Gastrocnemius medialis (tissue), 4 donors: ENCODE measurements at regions of chr17 and their contacts with region 1.

Region 1: DNA sequence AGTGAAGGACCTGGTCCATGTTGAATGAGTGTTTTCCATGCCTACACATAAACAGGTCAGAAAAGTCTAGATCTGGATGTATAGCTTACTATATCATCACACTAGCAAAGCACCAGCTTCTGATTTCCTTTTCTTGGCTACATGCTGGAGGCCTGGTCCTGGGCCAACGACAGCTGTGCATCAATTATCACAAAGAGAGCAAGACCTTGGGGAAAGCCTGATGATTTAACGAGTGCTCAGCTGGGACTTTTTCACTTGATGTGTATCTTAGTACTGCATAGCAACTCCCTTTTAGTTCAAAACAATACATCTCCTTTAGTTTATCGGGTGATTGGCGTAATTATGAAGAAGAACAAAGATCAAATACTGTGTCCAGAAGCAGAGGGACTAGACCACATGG is 358.2 kb downstream of the KIF2B start:
- DNase-seq: no peak
- ATAC-seq: no peak
- H3K4me3 ChIP-seq: no peak overlapping the region
- H3K27ac ChIP-seq: no peak overlapping the region
- H3K4me1 ChIP-seq: no peaks in the 10 kb centered on the region
- H3K27me3 ChIP-seq: no peaks in the 10 kb centered on the region
- CTCF ChIP-seq: no peak
- POLR2A ChIP-seq: no peak

Region 2: DNA sequence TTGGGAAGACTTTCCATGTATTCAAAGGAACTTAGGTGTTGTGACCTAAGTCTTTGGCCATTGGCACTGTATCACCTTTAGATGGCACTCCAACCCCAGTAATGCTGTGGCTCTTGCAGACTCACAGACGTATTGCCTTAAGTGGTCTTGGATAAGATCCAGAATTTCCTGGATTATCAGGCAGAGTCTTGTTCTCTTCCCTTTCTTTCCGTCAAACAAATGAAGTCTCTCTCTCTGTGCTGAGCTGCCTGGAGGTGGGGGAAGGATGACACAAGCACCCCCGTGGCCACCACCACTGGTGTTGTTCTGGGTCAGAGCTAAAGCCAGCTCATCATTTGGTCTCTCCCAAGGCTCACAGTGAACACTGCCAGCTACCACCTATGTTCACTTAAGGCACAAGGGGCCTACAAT is 1148.1 kb before region 1 on chr17:
- in situ Hi-C with region 1: loop called in 1 of 4 experiments (anchors 25 kb)
- intact Hi-C with region 1: loop called (anchors 10 kb)
- DNase-seq: peak in 1 of 2 donors; percentile 18
- ATAC-seq: no peak
- H3K4me3 ChIP-seq: no peak overlapping the region
- H3K27ac ChIP-seq: no peak overlapping the region
- H3K4me1 ChIP-seq: no peaks in the 10 kb centered on the region
- H3K27me3 ChIP-seq: no peaks in the 10 kb centered on the region
- CTCF ChIP-seq: peak in 4 of 5 experiments; percentile 38 to 58 (median 48)
- POLR2A ChIP-seq: no peak

Region 3: GRCh38 chr17:54085934-54086333 is 95.0 kb before region 1 on chr17:
- in situ Hi-C with region 1: loop called in 1 of 4 experiments (anchors 25 kb)
- intact Hi-C with region 1: no loop called
- DNase-seq: no peak
- ATAC-seq: no peak
- H3K4me3 ChIP-seq: no peak overlapping the region
- H3K27ac ChIP-seq: no peak overlapping the region
- H3K4me1 ChIP-seq: no peaks in the 10 kb centered on the region
- H3K27me3 ChIP-seq: no peaks in the 10 kb centered on the region
- CTCF ChIP-seq: no peak
- POLR2A ChIP-seq: no peak

Region 4: GRCh38 chr17:54256401-54256929 is 75.5 kb after region 1 on chr17:
- in situ Hi-C with region 1: no loop called
- intact Hi-C with region 1: no loop called
- DNase-seq: no peak
- ATAC-seq: no peak
- H3K4me3 ChIP-seq: no peak overlapping the region
- H3K27ac ChIP-seq: no peak overlapping the region
- H3K4me1 ChIP-seq: no peaks in the 10 kb centered on the region
- H3K27me3 ChIP-seq: no peaks in the 10 kb centered on the region
- CTCF ChIP-seq: no peak
- POLR2A ChIP-seq: no peak

Region 5: GRCh38 chr17:54666562-54666961 is 485.6 kb after region 1 on chr17:
- in situ Hi-C with region 1: no loop called
- intact Hi-C with region 1: no loop called
- DNase-seq: no peak
- ATAC-seq: no peak
- H3K4me3 ChIP-seq: no peak overlapping the region
- H3K27ac ChIP-seq: no peak overlapping the region
- H3K4me1 ChIP-seq: no peaks in the 10 kb centered on the region
- H3K27me3 ChIP-seq: no peaks in the 10 kb centered on the region
- CTCF ChIP-seq: no peak
- POLR2A ChIP-seq: no peak